ENCODE measurements at regions of chr9 and their contacts with region 1.

Region 1: GRCh38 chr9:69877854-69878514 is 57.4 kb downstream of the CFAP95 start:
- DNase-seq: no peak

Region 2: DNA sequence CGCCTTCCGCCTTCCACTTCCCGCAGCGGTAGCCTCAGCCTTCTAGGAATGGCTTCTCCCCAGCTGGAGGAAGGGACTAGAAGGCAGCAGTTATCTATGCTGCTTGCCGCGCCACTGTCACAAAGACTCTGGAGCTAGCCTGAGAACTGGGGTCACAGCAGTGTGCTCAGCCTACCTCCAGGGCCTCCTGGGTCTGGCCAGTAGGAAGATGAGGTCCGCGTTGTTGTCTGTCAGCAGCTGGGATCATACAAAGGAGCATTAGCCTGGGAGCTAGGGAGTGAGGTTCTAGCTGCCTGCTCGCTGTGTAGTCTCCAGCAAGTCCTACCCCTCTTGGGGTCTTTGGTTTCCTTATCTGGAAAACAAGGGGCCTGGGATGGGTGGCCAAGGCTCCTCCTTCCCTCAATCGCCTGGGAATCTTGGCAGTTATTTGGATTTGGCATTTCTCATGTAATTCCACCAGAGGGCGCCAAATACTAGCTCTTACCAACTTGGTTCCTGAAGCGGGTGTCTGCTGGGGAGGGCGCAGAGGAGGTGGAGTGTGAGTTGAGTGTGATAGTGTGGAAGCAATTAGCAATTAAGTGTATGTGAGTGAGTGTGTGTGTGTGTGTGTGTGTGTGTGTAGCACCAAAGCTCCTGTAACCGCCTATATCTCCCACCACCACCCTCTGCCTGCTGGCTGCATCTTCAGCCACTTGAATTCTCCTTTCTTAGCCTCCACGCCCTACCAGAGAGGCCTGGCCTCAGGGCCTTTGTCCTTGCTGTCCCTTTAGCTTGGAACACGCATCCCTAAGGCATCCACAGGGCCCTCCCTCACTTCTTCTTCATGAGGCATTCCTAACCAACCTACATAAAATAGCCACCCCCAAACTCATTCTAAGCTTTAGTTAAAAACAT is 455.8 kb before region 1 on chr9:
- intact Hi-C with region 1: loop called (anchors 2 kb)
- DNase-seq: peak in 7 of 10 donors; percentile 48 to 93 (median 65)

Region 3: GRCh38 chr9:69549310-69550202 is 328.4 kb before region 1 on chr9:
- intact Hi-C with region 1: loop called (anchors 10 kb)
- DNase-seq: peak in 2 of 10 donors; percentile 43 to 83

Region 4: GRCh38 chr9:69771775-69772418 is 106.1 kb before region 1 on chr9:
- intact Hi-C with region 1: loop called (anchors 10 kb)
- DNase-seq: no peak

Measured in posterior cingulate gyrus (tissue), 11 donors.